IMR-90 (cell line): ENCODE measurements at regions of chr6 and their contacts with region 1.

Region 1: GRCh38 chr6:71420693-71421328 is 132.2 kb downstream of the OGFRL1 start:
- DNase-seq: peak; percentile 94
- ATAC-seq: peak; percentile 98
- H3K4me3 ChIP-seq: peak overlapping the region; percentile 63
- H3K27ac ChIP-seq: peak overlapping the region; percentile 52
- H3K4me1 ChIP-seq: no peaks in the 10 kb centered on the region
- H3K27me3 ChIP-seq: no peaks in the 10 kb centered on the region
- CTCF ChIP-seq: no peak
- POLR2A ChIP-seq: peak; percentile 54; the same call in 1 of the 2 replicates
- RAD21 ChIP-seq: no peak

Region 2: DNA sequence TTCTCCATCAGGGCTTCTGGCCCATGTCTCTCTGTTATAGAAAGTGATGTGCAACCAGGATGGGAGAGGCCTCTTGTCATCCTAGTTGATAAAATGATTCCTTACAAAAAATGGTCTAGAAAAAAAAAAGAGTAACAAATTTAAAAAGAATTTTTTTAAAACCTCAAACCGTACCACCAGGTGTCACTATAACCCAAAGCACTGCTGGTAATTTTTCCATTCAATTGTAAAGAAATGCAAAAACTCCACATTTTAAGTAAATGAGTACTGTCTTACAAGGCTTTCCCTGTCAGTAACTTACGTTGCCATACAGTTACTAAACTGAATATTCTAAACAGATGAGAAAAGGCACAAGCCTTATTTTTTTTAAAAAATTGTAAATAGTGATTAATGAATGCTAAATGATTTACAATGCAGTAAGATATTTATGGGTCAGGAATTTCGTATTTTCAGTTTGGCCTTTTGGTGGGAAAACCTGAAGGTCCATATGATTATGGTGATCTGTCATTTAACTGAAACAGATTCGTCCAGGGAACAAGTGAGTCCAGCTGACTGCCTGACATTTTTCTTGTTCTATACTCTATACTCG is 36.8 kb before region 1 on chr6:
- CTCF ChIA-PET with region 1: no interaction called
- POLR2A ChIA-PET with region 1: no interaction called
- dilution Hi-C with region 1: no loop called
- in situ Hi-C with region 1: no loop called
- intact Hi-C with region 1: loop called (anchors 2 kb)
- DNase-seq: peak; percentile 72
- ATAC-seq: peak; percentile 64
- H3K4me3 ChIP-seq: no peak overlapping the region
- H3K27ac ChIP-seq: no peak overlapping the region
- H3K4me1 ChIP-seq: peaks cover 9% of the 10 kb centered on the region
- H3K27me3 ChIP-seq: no peaks in the 10 kb centered on the region
- CTCF ChIP-seq: peak; percentile 82
- POLR2A ChIP-seq: peak; percentile 50; the same call in 1 of the 2 replicates
- RAD21 ChIP-seq: peak; percentile 96

Region 3: GRCh38 chr6:71468841-71469750 is 48.3 kb after region 1 on chr6:
- CTCF ChIA-PET with region 1: no interaction called
- POLR2A ChIA-PET with region 1: no interaction called
- dilution Hi-C with region 1: no loop called
- in situ Hi-C with region 1: no loop called
- intact Hi-C with region 1: loop called (anchors 5 kb)
- DNase-seq: peak; percentile 95
- ATAC-seq: peak; percentile 91
- H3K4me3 ChIP-seq: peak overlapping the region; percentile 56; the same call in 1 of the 2 replicates
- H3K27ac ChIP-seq: peak overlapping the region; percentile 93
- H3K4me1 ChIP-seq: peaks cover 7% of the 10 kb centered on the region
- H3K27me3 ChIP-seq: no peaks in the 10 kb centered on the region
- CTCF ChIP-seq: no peak
- POLR2A ChIP-seq: no peak
- RAD21 ChIP-seq: no peak

Region 4: DNA sequence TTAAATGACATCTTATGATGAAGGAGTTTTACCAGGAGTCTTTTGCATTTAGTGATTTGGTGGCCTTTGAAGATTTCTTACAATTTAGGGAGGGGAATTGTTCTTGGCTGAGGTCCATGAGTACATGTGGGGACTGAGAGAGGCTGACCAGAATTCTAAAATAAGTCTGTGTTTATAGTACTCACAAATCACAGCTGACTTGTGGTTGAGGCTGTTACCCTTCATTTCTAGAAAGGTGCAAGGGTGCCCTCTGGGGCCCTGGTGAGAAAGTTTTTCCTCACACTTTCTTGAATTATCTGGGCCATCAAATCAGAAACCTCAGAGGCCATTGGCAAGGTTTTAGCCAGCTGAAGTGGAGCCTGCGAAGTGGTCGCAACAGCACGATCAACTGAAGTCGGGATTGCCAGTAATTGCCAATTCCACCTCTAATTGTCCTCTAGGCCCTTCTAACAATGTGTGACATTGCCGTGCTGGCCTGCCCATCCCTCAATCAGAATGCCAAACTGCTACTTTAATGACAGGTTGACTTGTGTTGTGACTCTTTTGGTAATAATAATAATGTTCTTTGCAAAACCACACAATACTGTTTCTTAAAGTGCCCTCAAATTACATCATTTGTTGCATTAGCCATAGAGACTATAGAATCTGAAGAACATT is 89.4 kb after region 1 on chr6:
- CTCF ChIA-PET with region 1: interaction called, 4 read pairs
- POLR2A ChIA-PET with region 1: no interaction called
- dilution Hi-C with region 1: no loop called
- in situ Hi-C with region 1: loop called (anchors 10 kb)
- intact Hi-C with region 1: loop called (anchors 1 kb)
- DNase-seq: peak; percentile 84
- ATAC-seq: peak; percentile 86
- H3K4me3 ChIP-seq: no peak overlapping the region
- H3K27ac ChIP-seq: no peak overlapping the region
- H3K4me1 ChIP-seq: peaks cover 8% of the 10 kb centered on the region
- H3K27me3 ChIP-seq: no peaks in the 10 kb centered on the region
- CTCF ChIP-seq: peak; percentile 94
- POLR2A ChIP-seq: no peak
- RAD21 ChIP-seq: peak; percentile 96

Region 5: DNA sequence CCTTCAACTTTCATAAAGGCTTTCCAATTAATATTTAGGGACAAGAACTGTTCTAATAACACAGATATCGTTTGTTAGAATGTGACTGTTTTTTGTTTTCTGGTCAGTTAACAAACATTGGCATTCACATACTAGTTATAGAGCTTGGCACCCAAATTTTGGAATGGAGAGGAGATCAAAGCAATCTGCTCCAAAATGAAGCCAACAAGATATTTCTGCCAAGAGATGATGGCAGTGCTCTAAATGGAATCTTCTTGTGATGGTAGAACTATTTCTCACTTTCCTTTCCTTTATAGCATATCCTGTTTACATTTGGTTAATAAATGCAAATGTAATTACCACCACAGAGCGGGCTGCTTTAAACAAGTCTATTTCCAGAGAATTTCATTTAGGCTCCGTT is 257.3 kb after region 1 on chr6:
- CTCF ChIA-PET with region 1: no interaction called
- POLR2A ChIA-PET with region 1: no interaction called
- dilution Hi-C with region 1: no loop called
- in situ Hi-C with region 1: no loop called
- intact Hi-C with region 1: no loop called
- DNase-seq: no peak
- ATAC-seq: no peak
- H3K4me3 ChIP-seq: no peak overlapping the region
- H3K27ac ChIP-seq: no peak overlapping the region
- H3K4me1 ChIP-seq: no peaks in the 10 kb centered on the region
- H3K27me3 ChIP-seq: no peaks in the 10 kb centered on the region
- CTCF ChIP-seq: no peak
- POLR2A ChIP-seq: no peak
- RAD21 ChIP-seq: no peak